ENCODE measurements at regions of chr15 and their contacts with region 1.

Region 1: GRCh38 chr15:70875001-70875782 is 17.0 kb downstream of the THAP10 start:
- DNase-seq: no peak
- ATAC-seq: peak in 1 of 2 donors; percentile 55
- H3K4me3 ChIP-seq: no peak overlapping the region
- H3K27ac ChIP-seq: no peak overlapping the region
- H3K4me1 ChIP-seq: no peaks in the 10 kb centered on the region
- H3K27me3 ChIP-seq: no peaks in the 10 kb centered on the region

Region 2: GRCh38 chr15:70699890-70700289 is 175.3 kb before region 1 on chr15:
- intact Hi-C with region 1: no loop called
- DNase-seq: no peak
- ATAC-seq: no peak
- H3K4me3 ChIP-seq: peak overlapping the region; percentile 20
- H3K27ac ChIP-seq: no peak overlapping the region
- H3K4me1 ChIP-seq: peaks cover 9% of the 10 kb centered on the region
- H3K27me3 ChIP-seq: no peaks in the 10 kb centered on the region

Region 3: GRCh38 chr15:70795311-70795665 is 79.9 kb before region 1 on chr15:
- intact Hi-C with region 1: no loop called
- DNase-seq: no peak
- ATAC-seq: no peak
- H3K4me3 ChIP-seq: no peak overlapping the region
- H3K27ac ChIP-seq: no peak overlapping the region
- H3K4me1 ChIP-seq: no peaks in the 10 kb centered on the region
- H3K27me3 ChIP-seq: no peaks in the 10 kb centered on the region

Region 4: DNA sequence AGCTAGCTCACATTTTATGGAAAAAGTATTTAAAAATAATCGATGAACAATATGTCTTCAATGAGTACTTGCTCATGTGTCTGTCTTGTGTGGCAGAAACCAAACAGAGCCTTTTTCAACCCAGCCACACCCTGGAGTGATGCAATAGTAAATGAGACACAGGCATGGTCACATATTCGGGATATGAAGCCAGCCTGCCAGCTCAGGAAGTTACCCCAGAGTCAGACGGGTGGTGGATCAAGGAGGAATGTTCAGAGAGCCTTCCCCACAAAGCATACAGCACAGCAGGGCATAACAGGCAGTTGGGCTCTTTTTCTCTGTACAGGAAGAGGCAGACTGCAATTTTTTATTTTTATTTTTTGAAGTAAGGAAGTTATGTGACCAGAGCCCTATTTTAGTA is 48.6 kb before region 1 on chr15:
- intact Hi-C with region 1: loop called (anchors 5 to 10 kb)
- DNase-seq: peak in 2 of 3 donors; percentile 66 to 79
- ATAC-seq: peak; percentile 83 to 87
- H3K4me3 ChIP-seq: no peak overlapping the region
- H3K27ac ChIP-seq: no peak overlapping the region
- H3K4me1 ChIP-seq: no peaks in the 10 kb centered on the region
- H3K27me3 ChIP-seq: no peaks in the 10 kb centered on the region

Measured in right cardiac atrium (tissue), 5 donors.